ENCODE measurements at regions of chr20 and their contacts with region 1.

Region 1: DNA sequence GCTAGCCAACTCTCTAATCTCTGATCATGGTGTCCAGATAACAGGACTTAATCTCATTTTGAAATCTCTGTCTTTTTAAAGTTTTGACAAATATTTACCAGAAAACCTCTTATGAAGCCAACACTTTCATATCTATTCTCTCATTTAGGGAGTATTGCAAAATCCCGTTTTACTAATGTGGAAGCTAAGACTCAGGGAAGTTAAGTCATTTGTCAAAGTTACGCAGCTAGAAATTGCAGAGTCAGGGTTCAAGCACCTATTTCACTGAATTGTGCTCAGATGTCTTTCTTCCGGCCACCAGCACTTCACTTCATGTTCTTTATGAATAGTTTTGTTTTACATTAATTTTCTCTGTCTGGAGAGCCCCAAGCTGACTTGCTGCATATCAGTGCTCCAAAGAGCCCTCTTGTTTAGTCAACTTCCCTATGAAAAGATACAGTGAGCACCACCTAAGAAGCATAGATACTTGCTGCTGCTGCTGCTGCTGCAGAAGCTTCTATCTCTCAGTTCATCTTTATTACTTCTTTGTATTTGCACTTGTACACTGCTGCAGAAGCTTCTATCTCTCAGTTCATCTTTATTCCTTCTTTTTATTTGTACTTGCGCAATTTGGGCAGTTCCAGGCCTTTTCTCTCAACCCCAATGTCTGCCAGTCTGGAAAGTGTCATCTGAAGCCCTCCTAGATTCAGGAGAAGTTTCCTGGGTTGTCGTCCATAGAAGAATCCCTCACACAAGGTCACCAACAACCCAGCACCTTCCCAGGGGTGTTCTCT is 329.7 kb downstream of the MAFB start:
- H3K4me3 Mint-ChIP-seq: peak overlapping the region; percentile 35
- H3K27ac Mint-ChIP-seq: peak overlapping the region; percentile 83
- H3K4me1 Mint-ChIP-seq: peaks cover 89% of the 10 kb centered on the region
- H3K27me3 Mint-ChIP-seq: peaks cover 6% of the 10 kb centered on the region

Region 2: GRCh38 chr20:39861381-39861780 is 497.9 kb before region 1 on chr20:
- intact Hi-C with region 1: no loop called
- H3K4me3 Mint-ChIP-seq: no peak overlapping the region
- H3K27ac Mint-ChIP-seq: no peak overlapping the region
- H3K4me1 Mint-ChIP-seq: no peaks in the 10 kb centered on the region
- H3K27me3 Mint-ChIP-seq: peaks cover 2% of the 10 kb centered on the region

Region 3: GRCh38 chr20:40309731-40310130 is 49.6 kb before region 1 on chr20:
- intact Hi-C with region 1: no loop called
- H3K4me3 Mint-ChIP-seq: no peak overlapping the region
- H3K27ac Mint-ChIP-seq: no peak overlapping the region
- H3K4me1 Mint-ChIP-seq: peaks cover 19% of the 10 kb centered on the region
- H3K27me3 Mint-ChIP-seq: peaks cover 13% of the 10 kb centered on the region

Region 4: GRCh38 chr20:40339661-40340449 is 19.5 kb before region 1 on chr20:
- intact Hi-C with region 1: loop called (anchors 2 kb)
- H3K4me3 Mint-ChIP-seq: no peak overlapping the region
- H3K27ac Mint-ChIP-seq: peak overlapping the region; percentile 91
- H3K4me1 Mint-ChIP-seq: peaks cover 59% of the 10 kb centered on the region
- H3K27me3 Mint-ChIP-seq: no peaks in the 10 kb centered on the region

Region 5: DNA sequence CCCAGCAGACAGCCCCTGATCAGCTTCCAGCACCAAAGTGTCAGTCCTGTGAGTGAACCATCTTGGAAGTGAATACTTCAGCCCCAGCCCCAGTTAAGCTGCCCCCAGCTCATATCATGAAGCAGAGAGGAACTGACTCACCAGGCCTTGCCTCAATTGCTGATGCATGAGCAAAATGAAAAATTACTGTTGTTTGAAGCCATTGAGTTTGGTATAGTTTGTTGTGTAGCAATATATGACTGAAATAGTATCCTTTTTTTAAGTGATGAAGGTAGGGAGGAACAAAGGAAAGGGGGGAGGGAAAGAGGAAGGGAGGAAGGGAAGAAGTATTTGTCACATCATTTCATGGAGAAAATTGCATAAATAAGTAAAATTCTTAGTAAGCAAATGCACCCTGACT is 63.3 kb after region 1 on chr20:
- intact Hi-C with region 1: loop called (anchors 10 kb)
- H3K4me3 Mint-ChIP-seq: no peak overlapping the region
- H3K27ac Mint-ChIP-seq: peak overlapping the region; percentile 60
- H3K4me1 Mint-ChIP-seq: peaks cover 45% of the 10 kb centered on the region
- H3K27me3 Mint-ChIP-seq: no peaks in the 10 kb centered on the region

Measured in dendritic cell treated with granulocyte-macrophage colony-stimulating factor and Interleukin-4, amounts not matched to agents 40 ng/mL and 50 ng/mL, for 4 days (primary cell).